OCI-LY7 (cell line): ENCODE measurements at regions of chr3 and their contacts with region 1.

Region 1: DNA sequence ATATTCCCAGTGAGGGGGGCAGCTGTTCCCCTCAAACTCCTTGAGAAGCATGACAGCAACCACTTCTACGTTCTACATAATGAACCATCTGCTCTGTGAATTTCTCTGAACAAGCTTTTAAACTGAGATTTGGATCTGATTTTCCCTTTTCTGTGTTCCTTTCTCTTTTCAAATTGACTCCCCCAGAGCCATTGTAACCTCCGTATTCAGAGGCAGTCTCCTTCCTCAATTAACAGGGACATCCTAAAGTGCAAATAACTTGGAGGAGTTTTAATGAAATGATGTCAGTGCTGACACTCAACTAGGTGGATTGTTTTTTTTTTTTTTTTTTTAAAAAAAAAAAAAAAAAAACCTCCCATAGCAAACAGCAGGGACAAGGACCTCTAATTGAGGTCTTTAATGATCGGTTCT is 48.8 kb downstream of the ADAMTS9 start:
- DNase-seq: no peak
- H3K4me3 ChIP-seq: no peak overlapping the region
- H3K27ac ChIP-seq: no peak overlapping the region
- H3K4me1 ChIP-seq: no peaks in the 10 kb centered on the region
- CTCF ChIP-seq: no peak

Region 2: GRCh38 chr3:64501298-64501906 is 137.6 kb before region 1 on chr3:
- CTCF ChIA-PET with region 1: no interaction called
- POLR2A ChIA-PET with region 1: no interaction called
- intact Hi-C with region 1: no loop called
- DNase-seq: no peak
- H3K4me3 ChIP-seq: no peak overlapping the region
- H3K27ac ChIP-seq: no peak overlapping the region
- H3K4me1 ChIP-seq: no peaks in the 10 kb centered on the region
- CTCF ChIP-seq: no peak

Region 3: DNA sequence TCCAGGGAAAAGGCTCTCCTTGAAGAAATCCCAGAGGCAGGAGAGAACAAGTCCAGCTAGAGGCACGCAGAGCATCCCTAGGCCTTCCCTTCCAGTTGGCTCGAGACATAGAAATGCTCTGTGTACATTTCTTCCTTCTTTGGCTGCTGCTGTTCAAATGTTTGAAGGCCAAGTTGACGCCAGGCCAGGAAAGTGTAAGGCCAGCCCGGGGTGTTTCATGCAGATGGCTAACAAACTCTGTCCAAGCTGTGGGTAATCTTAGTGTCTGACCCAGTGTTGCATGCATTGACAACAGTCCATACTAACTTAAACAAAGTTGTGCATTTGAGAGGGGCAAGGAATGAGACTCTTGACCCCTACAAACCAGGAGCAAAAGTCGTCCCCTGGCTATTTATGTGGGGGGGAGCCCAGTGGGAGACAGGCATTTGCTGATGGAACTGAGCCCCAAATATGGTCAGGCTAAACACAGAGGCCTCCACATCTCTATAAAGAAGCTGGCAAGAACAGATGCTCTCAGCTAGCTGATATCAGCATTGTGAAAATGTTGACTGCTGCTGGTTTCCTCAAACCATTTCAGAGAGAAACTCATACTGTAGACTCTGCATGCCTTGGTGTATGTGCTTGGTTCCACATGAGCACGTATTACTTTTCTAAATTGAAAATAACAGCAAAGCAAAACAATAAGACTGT is 90.6 kb before region 1 on chr3:
- CTCF ChIA-PET with region 1: no interaction called
- POLR2A ChIA-PET with region 1: interaction called, 11 read pairs
- intact Hi-C with region 1: no loop called
- DNase-seq: no peak
- H3K4me3 ChIP-seq: no peak overlapping the region
- H3K27ac ChIP-seq: no peak overlapping the region
- H3K4me1 ChIP-seq: no peaks in the 10 kb centered on the region
- CTCF ChIP-seq: no peak

Region 4: DNA sequence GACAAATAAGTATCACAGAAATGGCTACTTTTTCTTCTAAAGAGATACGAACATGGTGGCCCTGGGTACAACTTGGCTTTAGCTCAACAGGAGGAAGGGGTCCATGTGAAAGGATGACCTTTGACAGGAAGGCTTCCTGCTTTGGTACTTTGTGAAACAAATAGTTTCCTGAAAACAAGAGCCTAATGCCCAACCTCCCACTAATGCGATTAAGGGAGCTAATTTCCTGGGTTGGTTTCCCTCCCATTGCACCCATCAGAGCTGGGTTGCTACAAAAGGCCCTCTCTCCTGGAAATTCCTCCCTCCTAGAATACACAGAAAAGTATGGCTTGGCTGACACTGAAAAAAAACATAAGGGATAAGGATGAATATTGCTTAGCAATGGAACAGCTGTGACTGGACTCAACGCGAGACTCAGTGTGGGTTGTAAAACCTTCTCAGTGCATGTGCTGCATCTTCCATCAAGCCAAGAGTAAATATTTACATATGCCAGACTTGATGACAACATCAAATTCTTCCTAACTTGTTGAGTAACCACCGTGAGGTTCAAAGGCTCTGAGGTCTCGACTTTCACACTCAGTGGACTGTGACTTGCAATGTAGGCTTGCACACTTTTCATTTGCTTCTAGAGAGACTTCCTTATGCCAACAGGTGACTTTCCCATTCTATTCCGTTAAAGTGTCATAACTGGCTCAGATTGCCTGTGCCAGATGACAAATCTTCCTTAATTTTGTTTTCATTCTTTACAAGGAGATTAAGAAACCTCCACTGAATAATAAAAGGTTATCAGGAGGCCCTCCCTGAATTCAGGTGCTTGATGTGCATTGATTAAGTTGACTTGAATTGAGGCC is 11.3 kb before region 1 on chr3:
- CTCF ChIA-PET with region 1: no interaction called
- POLR2A ChIA-PET with region 1: interaction called, 11 read pairs
- intact Hi-C with region 1: no loop called
- DNase-seq: no peak
- H3K4me3 ChIP-seq: no peak overlapping the region
- H3K27ac ChIP-seq: no peak overlapping the region
- H3K4me1 ChIP-seq: no peaks in the 10 kb centered on the region
- CTCF ChIP-seq: no peak